BJ (cell line): ENCODE measurements at regions of chr3 and their contacts with region 1.

Region 1: DNA sequence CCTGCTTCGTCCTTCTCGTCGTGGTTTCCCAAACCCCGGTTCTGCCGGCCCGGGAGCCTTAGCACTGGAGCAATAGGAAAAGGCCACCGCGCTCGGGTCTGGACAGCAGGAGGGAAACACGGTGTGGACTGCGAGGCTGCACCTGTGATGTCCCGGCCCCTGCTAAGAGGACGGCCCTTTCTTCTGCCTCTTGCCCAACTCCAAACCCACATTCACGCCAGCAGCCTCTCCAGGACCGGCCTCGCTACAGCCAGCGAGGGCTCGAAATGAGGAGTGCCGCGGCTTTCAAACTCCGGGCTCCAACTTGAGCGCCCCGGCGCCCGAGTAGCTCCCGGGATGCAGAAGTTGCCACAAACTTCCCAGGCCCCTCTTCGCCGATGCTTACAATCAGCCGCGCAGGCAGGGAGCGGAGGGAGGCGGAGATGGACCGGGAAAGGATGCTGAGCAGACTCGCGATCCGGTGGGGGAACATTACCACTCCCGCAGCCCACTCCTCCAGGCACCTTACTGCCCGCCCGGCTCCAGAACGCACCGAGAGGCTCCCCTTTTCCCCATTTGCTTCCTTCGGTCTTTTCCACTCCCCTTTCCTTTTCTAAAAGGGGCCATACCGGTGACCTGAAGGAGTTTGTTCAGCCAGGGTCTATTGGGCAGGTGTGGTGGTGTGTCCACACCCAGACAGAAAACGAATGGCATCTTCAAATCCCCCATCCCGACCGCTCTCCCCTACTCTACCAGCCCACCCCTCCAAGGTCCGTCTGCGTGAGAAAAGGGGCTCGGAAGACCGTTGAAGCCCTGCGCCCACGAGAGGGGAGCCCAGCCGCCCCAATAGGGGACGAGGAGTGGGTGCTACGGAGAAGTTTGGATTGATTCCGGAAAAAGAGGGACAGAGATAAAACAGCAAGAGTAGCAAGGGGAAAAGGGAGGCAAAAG is 18.8 kb upstream of the SATB1 start:
- DNase-seq: no peak
- H3K4me3 ChIP-seq: peak overlapping the region; percentile 43
- H3K27me3 ChIP-seq: peaks cover 23% of the 10 kb centered on the region
- CTCF ChIP-seq: no peak

Region 2: GRCh38 chr3:18307529-18307928 is 136.4 kb before region 1 on chr3:
- CTCF ChIA-PET with region 1: no interaction called
- POLR2A ChIA-PET with region 1: no interaction called
- DNase-seq: no peak
- H3K4me3 ChIP-seq: no peak overlapping the region
- H3K27me3 ChIP-seq: no peaks in the 10 kb centered on the region
- CTCF ChIP-seq: no peak

Region 3: DNA sequence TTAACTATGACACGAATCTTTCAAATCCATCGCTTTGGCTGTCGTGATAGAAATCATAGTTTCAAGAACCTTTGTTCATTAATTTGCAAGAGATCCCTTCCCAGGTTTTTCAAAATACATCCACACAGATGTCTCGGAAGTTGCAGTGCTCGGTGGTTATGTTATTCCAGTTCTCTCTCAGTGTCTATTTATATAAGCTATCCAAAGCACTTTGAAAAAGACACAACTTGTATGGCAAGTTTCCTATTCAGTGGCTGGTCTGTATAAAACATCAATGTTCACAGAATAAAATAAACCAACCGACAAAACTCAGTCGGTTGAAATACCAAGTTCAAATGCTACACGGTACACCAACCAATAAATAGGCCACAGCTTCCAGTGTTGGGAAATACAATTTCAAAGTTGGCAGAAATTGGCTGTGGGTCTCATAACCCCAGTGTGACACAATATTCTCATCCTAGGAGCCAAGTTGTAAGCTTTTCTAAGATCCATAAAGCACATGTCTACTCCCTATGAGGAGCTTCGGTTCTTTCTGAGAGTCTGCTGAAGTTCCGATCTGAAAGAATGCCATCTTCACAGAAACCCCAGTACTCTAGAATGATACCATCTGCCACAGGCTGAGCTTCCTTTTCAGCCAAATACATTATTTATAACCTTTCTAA is 42.5 kb before region 1 on chr3:
- CTCF ChIA-PET with region 1: no interaction called
- POLR2A ChIA-PET with region 1: no interaction called
- DNase-seq: no peak
- H3K4me3 ChIP-seq: no peak overlapping the region
- H3K27me3 ChIP-seq: no peaks in the 10 kb centered on the region
- CTCF ChIP-seq: no peak

Region 4: GRCh38 chr3:18432752-18433151 is 11.2 kb before region 1 on chr3:
- CTCF ChIA-PET with region 1: interaction called, 3 read pairs
- POLR2A ChIA-PET with region 1: interaction called, 11 read pairs
- DNase-seq: no peak
- H3K4me3 ChIP-seq: no peak overlapping the region
- H3K27me3 ChIP-seq: no peaks in the 10 kb centered on the region; the same call in 1 of the 2 replicates
- CTCF ChIP-seq: no peak

Region 5: GRCh38 chr3:18853269-18853668 is 409.3 kb after region 1 on chr3:
- CTCF ChIA-PET with region 1: no interaction called
- POLR2A ChIA-PET with region 1: no interaction called
- DNase-seq: no peak
- H3K4me3 ChIP-seq: no peak overlapping the region
- H3K27me3 ChIP-seq: no peaks in the 10 kb centered on the region
- CTCF ChIP-seq: no peak